GM12878 (cell line): ENCODE measurements at regions of chr4 and their contacts with region 1.

Region 1: GRCh38 chr4:18155062-18156041 is 133.8 kb upstream of the LCORL start:
- DNase-seq: no peak
- ATAC-seq: no peak
- H3K4me3 ChIP-seq: no peak overlapping the region
- H3K27ac ChIP-seq: no peak overlapping the region
- H3K4me1 ChIP-seq: no peaks in the 10 kb centered on the region
- H3K27me3 ChIP-seq: no peaks in the 10 kb centered on the region
- CTCF ChIP-seq: no peak
- EP300 ChIP-seq: no peak
- POLR2A ChIP-seq: no peak
- RAD21 ChIP-seq: no peak

Region 2: DNA sequence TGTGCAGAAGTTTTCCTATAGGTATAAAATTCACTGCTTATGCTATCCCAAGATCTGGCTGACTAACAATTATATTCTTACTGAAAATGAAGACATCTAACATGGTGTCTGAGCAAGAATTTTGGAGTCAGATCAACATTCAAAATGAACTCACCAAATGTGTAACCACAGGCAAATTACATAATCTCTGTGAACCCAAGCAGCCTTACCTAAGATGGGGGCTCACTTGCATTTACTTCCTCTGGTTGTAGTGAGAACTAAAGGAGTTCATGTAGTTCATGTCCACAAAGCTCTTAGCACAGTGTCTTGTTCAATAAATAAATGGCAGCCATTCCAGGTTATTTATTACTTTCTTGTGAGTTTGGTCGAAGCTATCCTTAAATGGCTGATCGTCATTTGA is 30.1 kb after region 1 on chr4:
- CTCF ChIA-PET with region 1: no interaction called
- POLR2A ChIA-PET with region 1: no interaction called
- RAD21 ChIA-PET with region 1: no interaction called
- SMC1A ChIA-PET with region 1: no interaction called
- in situ Hi-C with region 1: no loop called
- intact Hi-C with region 1: loop called (anchors 2 kb)
- DNase-seq: no peak
- ATAC-seq: no peak
- H3K4me3 ChIP-seq: no peak overlapping the region
- H3K27ac ChIP-seq: no peak overlapping the region
- H3K4me1 ChIP-seq: no peaks in the 10 kb centered on the region
- H3K27me3 ChIP-seq: no peaks in the 10 kb centered on the region
- CTCF ChIP-seq: no peak
- EP300 ChIP-seq: no peak
- POLR2A ChIP-seq: no peak
- RAD21 ChIP-seq: no peak

Region 3: DNA sequence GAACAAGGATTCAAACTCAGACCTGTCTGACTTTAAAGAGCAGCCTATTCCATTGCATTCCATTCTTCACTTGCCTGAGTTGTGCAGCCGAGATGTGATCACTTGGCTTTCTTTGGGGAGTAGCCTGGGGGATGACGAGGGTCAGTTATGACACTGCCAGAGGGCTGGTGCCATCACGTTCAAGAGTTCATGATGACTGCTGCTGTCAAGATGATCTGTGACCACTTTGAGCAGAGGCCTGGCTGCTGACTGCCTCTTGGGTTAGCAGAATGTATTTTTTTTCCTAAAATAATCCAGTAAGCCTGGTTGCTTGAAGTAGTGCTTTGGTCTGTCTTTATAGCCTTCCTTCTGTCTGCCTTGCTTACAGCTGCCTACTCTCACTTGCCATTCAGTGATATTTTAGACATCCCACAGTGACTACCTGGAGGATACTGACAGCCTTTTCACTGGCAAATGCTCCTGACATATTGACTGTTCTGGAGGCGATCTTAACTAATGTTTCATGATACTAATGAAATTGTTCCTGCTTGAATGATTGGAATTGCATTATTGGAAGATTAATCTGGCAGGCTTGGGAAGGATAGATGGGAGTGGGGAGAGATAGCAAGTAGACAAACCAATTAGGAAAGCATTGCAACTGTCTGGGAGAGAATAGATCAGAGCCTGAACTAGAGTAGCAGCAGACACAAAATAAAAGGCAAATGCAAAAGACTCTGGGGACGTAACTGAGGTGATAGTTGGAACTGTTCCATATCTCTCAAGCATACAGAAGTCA is 87.8 kb after region 1 on chr4:
- CTCF ChIA-PET with region 1: no interaction called
- POLR2A ChIA-PET with region 1: no interaction called
- RAD21 ChIA-PET with region 1: no interaction called
- SMC1A ChIA-PET with region 1: no interaction called
- in situ Hi-C with region 1: no loop called
- intact Hi-C with region 1: no loop called
- DNase-seq: no peak
- ATAC-seq: no peak
- H3K4me3 ChIP-seq: no peak overlapping the region
- H3K27ac ChIP-seq: no peak overlapping the region
- H3K4me1 ChIP-seq: no peaks in the 10 kb centered on the region
- H3K27me3 ChIP-seq: no peaks in the 10 kb centered on the region
- CTCF ChIP-seq: no peak
- EP300 ChIP-seq: no peak
- POLR2A ChIP-seq: no peak
- RAD21 ChIP-seq: no peak

Region 4: DNA sequence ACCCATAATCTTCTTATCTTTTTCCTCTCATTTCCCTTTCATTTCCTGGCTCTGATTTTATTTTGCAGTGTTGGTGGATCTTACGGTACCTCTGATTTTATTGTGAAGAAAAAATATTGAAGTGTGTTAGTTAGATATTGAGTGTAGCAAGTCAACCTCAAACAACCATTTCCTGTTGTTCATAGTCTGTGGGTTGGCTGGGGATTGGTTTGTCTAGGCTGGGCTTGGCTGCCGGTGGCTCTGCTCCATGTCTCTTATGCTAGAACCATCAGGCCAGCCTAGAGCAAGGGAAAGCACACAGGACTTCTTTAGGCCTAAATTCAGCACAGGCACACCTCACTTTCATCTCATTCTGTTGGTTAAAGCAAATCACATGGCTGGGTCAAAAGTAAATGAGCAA is 249.3 kb after region 1 on chr4:
- CTCF ChIA-PET with region 1: no interaction called
- POLR2A ChIA-PET with region 1: no interaction called
- RAD21 ChIA-PET with region 1: no interaction called
- SMC1A ChIA-PET with region 1: no interaction called
- in situ Hi-C with region 1: no loop called
- intact Hi-C with region 1: no loop called
- DNase-seq: no peak
- ATAC-seq: no peak
- H3K4me3 ChIP-seq: no peak overlapping the region
- H3K27ac ChIP-seq: no peak overlapping the region
- H3K4me1 ChIP-seq: no peaks in the 10 kb centered on the region
- H3K27me3 ChIP-seq: no peaks in the 10 kb centered on the region; a peak in 1 of 4 replicates
- CTCF ChIP-seq: no peak
- EP300 ChIP-seq: no peak
- POLR2A ChIP-seq: no peak
- RAD21 ChIP-seq: no peak